ENCODE measurements at regions of chr13 and their contacts with region 1.

Region 1: GRCh38 chr13:23921451-23921888 is 24.2 kb upstream of the C1QTNF9B start:
- DNase-seq: peak in 1 of 2 experiments; percentile 63
- H3K4me3 ChIP-seq: no peak overlapping the region
- H3K4me3 Mint-ChIP-seq: no peak overlapping the region
- H3K27ac Mint-ChIP-seq: no peak overlapping the region
- H3K4me1 ChIP-seq: no peaks in the 10 kb centered on the region; the same call in 1 of the 2 replicates
- H3K4me1 Mint-ChIP-seq: no peaks in the 10 kb centered on the region
- H3K27me3 ChIP-seq: no peaks in the 10 kb centered on the region
- H3K27me3 Mint-ChIP-seq: peaks cover 25% of the 10 kb centered on the region
- CTCF ChIP-seq: peak; percentile 62 to 80

Region 2: GRCh38 chr13:23579072-23579895 is 342.2 kb before region 1 on chr13:
- CTCF ChIA-PET with region 1: no interaction called
- POLR2A ChIA-PET with region 1: no interaction called
- intact Hi-C with region 1: no loop called
- DNase-seq: peak; percentile 93 to 98
- H3K4me3 ChIP-seq: peak overlapping the region; percentile 95
- H3K4me3 Mint-ChIP-seq: peak overlapping the region; percentile 87
- H3K27ac Mint-ChIP-seq: peak overlapping the region; percentile 37
- H3K4me1 ChIP-seq: peaks cover 17% of the 10 kb centered on the region; the same call in 1 of the 2 replicates
- H3K4me1 Mint-ChIP-seq: peaks cover 20% of the 10 kb centered on the region
- H3K27me3 ChIP-seq: no peaks in the 10 kb centered on the region
- H3K27me3 Mint-ChIP-seq: no peaks in the 10 kb centered on the region
- CTCF ChIP-seq: no peak

Region 3: DNA sequence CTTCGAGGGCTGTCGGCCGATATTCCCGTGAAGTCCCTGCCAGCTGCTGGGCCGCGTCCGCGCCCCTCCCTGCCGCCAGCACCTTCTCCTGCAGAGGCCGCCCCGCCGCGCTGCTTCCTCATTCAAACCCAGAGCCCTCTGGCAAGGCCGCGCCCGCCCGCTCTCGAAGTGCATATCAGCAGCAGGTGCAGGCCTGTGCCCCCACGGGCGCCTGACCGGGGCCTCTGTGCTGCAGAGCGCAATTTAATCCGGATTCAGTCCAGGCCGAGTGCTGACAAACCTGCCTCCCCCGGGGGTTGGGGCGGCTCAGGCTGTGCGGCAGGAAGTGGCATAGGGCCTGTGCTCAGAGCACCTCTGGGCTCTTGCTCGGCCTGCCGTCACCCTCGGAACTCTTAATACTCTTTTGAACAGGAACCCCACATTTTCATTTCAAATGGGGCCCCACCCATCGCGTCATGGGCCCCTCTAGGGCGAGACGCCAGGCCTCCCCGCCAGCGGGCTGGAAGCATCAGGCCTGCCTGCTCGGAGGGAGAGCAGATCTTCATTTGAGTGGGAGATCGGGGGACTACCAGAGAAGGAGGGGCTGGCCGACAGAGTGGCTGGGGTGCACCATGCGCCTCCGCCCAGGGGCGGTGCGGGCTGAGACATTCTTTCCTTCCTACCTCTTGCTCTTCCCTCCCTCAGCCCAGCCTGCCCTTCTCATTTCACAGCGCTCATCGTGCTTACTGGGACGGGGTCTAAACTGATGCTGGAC is 225.6 kb before region 1 on chr13:
- CTCF ChIA-PET with region 1: no interaction called
- POLR2A ChIA-PET with region 1: no interaction called
- intact Hi-C with region 1: no loop called
- DNase-seq: no peak
- H3K4me3 ChIP-seq: no peak overlapping the region
- H3K4me3 Mint-ChIP-seq: no peak overlapping the region
- H3K27ac Mint-ChIP-seq: no peak overlapping the region
- H3K4me1 ChIP-seq: no peaks in the 10 kb centered on the region
- H3K4me1 Mint-ChIP-seq: peaks cover 6% of the 10 kb centered on the region
- H3K27me3 ChIP-seq: no peaks in the 10 kb centered on the region
- H3K27me3 Mint-ChIP-seq: no peaks in the 10 kb centered on the region
- CTCF ChIP-seq: no peak

Region 4: DNA sequence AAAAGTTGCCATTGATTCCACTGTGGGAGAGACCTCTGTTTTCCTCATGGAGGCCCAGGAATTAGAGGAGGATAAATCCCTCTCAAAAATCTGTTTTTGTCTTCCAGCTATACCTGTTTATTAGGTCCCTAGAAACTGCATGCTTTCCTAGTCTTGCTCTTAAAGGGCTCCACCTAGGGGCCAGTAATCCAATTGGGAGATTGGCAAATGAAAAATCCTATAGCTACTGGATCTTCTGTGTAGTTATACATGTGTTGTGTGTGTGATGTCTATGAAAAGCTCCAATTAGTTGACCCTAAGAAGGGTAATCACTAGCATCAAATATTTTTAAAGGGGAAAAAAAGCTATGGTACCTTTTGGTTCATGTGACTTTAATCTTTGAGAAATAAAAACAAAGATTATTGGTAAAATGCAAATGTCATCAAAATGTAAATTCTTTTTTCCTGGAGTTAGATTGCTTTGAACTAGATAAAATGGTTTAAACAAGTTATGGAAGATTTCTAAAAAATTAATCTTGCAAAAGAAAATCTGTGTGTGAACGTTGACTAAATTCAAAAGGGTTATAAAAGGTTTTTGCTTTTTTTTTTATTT is 39.2 kb after region 1 on chr13:
- CTCF ChIA-PET with region 1: interaction called, 8 read pairs
- POLR2A ChIA-PET with region 1: no interaction called
- intact Hi-C with region 1: loop called (anchors 1 kb)
- DNase-seq: peak in 1 of 2 experiments; percentile 70
- H3K4me3 ChIP-seq: no peak overlapping the region
- H3K4me3 Mint-ChIP-seq: no peak overlapping the region
- H3K27ac Mint-ChIP-seq: no peak overlapping the region
- H3K4me1 ChIP-seq: peaks cover 4% of the 10 kb centered on the region; the same call in 1 of the 2 replicates
- H3K4me1 Mint-ChIP-seq: peaks cover 6% of the 10 kb centered on the region
- H3K27me3 ChIP-seq: no peaks in the 10 kb centered on the region
- H3K27me3 Mint-ChIP-seq: no peaks in the 10 kb centered on the region
- CTCF ChIP-seq: peak; percentile 71 to 88

Region 5: GRCh38 chr13:24020375-24020830 is 98.9 kb after region 1 on chr13:
- CTCF ChIA-PET with region 1: interaction called, 3 read pairs
- POLR2A ChIA-PET with region 1: interaction called, 3 read pairs
- intact Hi-C with region 1: loop called (anchors 1 kb)
- DNase-seq: peak in 1 of 2 experiments; percentile 46
- H3K4me3 ChIP-seq: no peak overlapping the region
- H3K4me3 Mint-ChIP-seq: no peak overlapping the region
- H3K27ac Mint-ChIP-seq: no peak overlapping the region
- H3K4me1 ChIP-seq: no peaks in the 10 kb centered on the region; the same call in 1 of the 2 replicates
- H3K4me1 Mint-ChIP-seq: no peaks in the 10 kb centered on the region
- H3K27me3 ChIP-seq: no peaks in the 10 kb centered on the region
- H3K27me3 Mint-ChIP-seq: no peaks in the 10 kb centered on the region
- CTCF ChIP-seq: peak; percentile 56 to 77

Region 6: DNA sequence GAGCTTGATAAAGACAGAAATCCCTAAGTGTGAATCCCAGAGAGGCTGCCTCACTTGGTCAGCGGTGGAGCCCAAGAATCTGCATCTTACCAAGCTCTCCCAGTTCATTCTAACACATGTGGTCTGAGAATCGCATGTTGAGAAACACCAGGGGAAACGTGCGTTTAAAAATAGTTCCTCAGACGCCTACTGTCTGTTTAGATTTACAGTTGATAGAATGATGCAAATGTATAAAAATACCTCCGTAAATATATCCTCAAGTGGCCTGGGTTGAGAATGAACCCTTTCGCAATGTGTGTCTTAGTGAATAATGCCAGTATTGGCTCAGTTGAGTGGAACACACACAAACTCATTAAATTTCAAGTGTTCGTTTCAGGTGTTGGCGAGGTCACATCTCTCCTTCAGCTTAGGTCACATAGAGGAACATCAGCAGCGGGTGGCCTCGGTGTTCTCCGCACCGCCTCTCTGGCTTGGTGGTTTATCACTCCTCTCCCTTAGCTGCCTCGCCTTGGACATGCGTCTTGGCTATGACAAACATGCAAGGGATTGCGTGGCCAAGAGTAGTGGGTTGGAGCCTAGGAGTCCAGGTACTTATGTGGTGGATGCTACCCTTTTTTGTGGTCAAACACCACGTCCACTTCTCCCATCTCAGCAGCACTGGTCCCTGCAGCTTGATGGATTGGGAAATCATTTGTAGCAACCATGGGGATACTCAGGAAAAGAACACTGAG is 121.4 kb after region 1 on chr13:
- CTCF ChIA-PET with region 1: no interaction called
- POLR2A ChIA-PET with region 1: no interaction called
- intact Hi-C with region 1: no loop called
- DNase-seq: no peak
- H3K4me3 ChIP-seq: no peak overlapping the region
- H3K4me3 Mint-ChIP-seq: no peak overlapping the region
- H3K27ac Mint-ChIP-seq: no peak overlapping the region
- H3K4me1 ChIP-seq: peaks cover 17% of the 10 kb centered on the region
- H3K4me1 Mint-ChIP-seq: peaks cover 14% of the 10 kb centered on the region
- H3K27me3 ChIP-seq: no peaks in the 10 kb centered on the region
- H3K27me3 Mint-ChIP-seq: no peaks in the 10 kb centered on the region
- CTCF ChIP-seq: no peak

Region 7: GRCh38 chr13:24160454-24161009 is 239.1 kb after region 1 on chr13 and contains the start of gene SPATA13:
- CTCF ChIA-PET with region 1: no interaction called
- POLR2A ChIA-PET with region 1: no interaction called
- intact Hi-C with region 1: loop called (anchors 5 kb)
- DNase-seq: peak; percentile 94 to 96
- H3K4me3 ChIP-seq: peak within 1 kb of the TSS; percentile 97
- H3K4me3 Mint-ChIP-seq: peak within 1 kb of the TSS; percentile 73
- H3K27ac Mint-ChIP-seq: peak within 1 kb of the TSS; percentile 16
- H3K4me1 ChIP-seq: peaks cover 9% of the 10 kb centered on the region
- H3K4me1 Mint-ChIP-seq: peaks cover 12% of the 10 kb centered on the region
- H3K27me3 ChIP-seq: no peaks in the 10 kb centered on the region
- H3K27me3 Mint-ChIP-seq: no peaks in the 10 kb centered on the region
- CTCF ChIP-seq: no peak
- total RNA-seq, gene SPATA13: 10.1 and 10.5 TPM in 2 replicates

Region 8: DNA sequence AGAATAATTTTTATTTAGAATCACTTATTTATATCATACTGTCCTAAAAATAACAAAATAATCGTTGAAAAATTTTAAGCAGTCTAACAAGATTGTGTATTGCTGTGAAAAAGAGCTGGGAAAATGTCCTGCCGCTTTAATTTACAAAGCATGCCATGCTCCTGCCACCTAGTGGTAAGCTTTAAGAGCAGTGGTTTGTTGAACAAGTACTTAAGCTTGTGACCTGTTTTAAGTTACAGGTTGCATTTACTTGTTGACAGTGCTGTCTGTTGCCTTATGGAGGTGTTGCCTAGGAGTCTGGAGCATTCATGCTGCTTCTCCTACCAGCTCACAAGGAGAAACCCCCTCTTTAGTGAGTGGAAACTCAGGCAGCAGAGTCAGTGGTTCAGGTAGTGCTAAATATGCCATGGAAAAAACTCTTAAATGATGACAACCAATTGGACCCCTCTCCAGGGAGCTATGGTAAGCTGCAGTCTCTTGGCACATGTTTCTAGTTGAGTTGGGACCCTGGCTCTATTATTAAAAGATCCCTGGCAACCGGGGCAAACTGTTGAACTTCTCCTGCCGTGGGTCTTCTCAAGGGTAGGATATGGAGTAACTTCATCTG is 307.5 kb after region 1 on chr13:
- CTCF ChIA-PET with region 1: interaction called, 3 read pairs
- POLR2A ChIA-PET with region 1: no interaction called
- intact Hi-C with region 1: loop called (anchors 1 kb)
- DNase-seq: peak in 1 of 2 experiments; percentile 60
- H3K4me3 ChIP-seq: no peak overlapping the region
- H3K4me3 Mint-ChIP-seq: no peak overlapping the region
- H3K27ac Mint-ChIP-seq: no peak overlapping the region
- H3K4me1 ChIP-seq: no peaks in the 10 kb centered on the region
- H3K4me1 Mint-ChIP-seq: peaks cover 6% of the 10 kb centered on the region
- H3K27me3 ChIP-seq: no peaks in the 10 kb centered on the region
- H3K27me3 Mint-ChIP-seq: no peaks in the 10 kb centered on the region
- CTCF ChIP-seq: peak; percentile 80 to 96

Measured in Caco-2 (cell line).